Sigmoid colon (tissue), 7 donors: ENCODE measurements at regions of chr9 and their contacts with region 1.

Region 1: DNA sequence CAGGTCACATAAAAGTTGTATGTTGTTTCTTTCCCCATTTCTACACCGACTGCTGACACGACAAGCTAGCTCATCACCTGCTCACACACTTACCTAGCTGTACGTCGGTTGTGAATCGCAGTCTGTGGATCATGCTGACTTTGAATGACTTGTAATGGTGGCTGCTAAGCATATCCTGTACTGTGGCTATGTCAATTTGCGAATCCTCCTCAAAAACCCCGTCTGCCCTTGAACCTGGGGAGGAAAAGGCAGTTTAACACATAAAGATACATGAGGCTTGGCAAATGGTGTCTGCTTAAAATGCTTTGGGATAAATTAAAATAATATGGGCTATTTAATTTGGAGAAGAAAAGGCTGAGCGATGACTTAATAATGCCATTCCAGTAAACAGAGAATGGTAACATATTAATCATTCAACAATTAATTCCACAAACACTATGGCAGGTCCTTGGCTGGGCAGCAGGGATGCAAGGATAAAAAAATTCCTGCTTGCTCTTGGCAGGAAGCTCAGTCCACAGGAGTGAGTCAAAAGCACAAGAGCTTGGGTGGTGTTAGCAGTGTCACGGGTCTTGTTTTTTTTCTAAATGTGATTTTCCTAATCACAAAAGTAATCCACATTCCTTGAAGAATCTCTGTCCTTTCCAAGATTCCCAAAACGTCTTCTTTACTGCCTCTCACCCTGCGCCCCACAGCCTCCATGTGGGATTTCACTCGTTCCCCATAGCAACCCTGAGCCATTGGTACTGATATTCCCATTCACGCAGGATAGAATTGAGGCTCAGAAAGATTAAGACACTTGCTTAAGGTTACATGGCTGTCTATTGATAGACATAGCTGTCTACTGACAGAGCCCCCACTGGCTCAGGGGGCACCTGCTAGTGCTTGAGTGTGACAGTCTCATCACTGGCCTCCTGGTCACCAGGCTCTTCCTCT is 222.4 kb downstream of the MAPKAP1 start:
- DNase-seq: peak; percentile 86
- H3K4me3 ChIP-seq: peak overlapping the region in 1 of 4 donors; percentile 21
- H3K27ac ChIP-seq: peak overlapping the region; percentile 61 to 82 (median 74)
- H3K4me1 ChIP-seq: peaks cover 0 to 45% (median 35%) of the 10 kb centered on the region in 4 donors
- H3K27me3 ChIP-seq: no peaks in the 10 kb centered on the region
- CTCF ChIP-seq: no peak
- EP300 ChIP-seq: peak in 2 of 4 donors; percentile 44 to 88
- POLR2A ChIP-seq: no peak

Region 2: GRCh38 chr9:125544988-125545651 is 60.5 kb after region 1 on chr9:
- intact Hi-C with region 1: loop called (anchors 5 kb)
- DNase-seq: no peak
- H3K4me3 ChIP-seq: no peak overlapping the region
- H3K27ac ChIP-seq: peak overlapping the region; percentile 72 to 81 (median 76)
- H3K4me1 ChIP-seq: peaks cover 0 to 79% (median 74%) of the 10 kb centered on the region in 4 donors
- H3K27me3 ChIP-seq: no peaks in the 10 kb centered on the region
- CTCF ChIP-seq: no peak
- EP300 ChIP-seq: no peak
- POLR2A ChIP-seq: no peak